ENCODE measurements at regions of chr4 and their contacts with region 1.

Region 1: DNA sequence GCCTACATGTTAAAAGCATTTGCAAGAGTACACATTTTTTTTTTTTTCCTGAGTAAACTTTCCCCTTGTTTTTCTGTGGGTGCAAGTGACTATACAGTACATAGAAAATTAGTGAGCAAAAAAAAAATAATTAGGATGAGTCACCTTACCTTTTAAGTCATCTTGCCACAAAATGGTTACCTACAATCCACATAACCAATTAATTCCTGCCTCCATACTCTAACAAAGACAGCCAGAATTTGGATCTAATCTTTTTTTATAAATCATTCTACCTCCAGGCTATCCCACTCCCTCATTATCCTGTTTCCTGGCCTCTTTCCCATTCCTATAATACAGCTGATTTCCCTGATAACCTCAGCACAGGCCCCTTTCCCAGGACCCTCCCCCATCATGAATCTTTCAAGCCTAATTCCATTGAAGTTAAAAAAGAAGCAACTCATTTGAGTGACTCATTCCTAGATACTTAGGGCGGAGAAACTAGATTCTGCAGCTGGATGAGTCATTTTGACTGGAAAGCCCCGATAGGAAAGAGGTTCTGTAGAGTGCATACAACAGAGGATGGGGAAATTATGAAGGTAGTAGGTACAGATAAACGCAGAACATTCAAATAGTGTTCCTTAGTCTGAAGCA is 128.2 kb downstream of the C4orf51 start:
- DNase-seq: peak; percentile 86
- ATAC-seq: peak; percentile 87
- H3K4me3 ChIP-seq: peak overlapping the region; percentile 18; the same call in 1 of the 2 replicates
- H3K27ac ChIP-seq: peak overlapping the region; percentile 90
- H3K4me1 ChIP-seq: peaks cover 36% of the 10 kb centered on the region
- H3K27me3 ChIP-seq: no peaks in the 10 kb centered on the region
- CTCF ChIP-seq: no peak
- EP300 ChIP-seq: peak; percentile 87 to 91
- POLR2A ChIP-seq: no peak
- RAD21 ChIP-seq: peak; percentile 34; the same call in 1 of the 2 replicates

Region 2: DNA sequence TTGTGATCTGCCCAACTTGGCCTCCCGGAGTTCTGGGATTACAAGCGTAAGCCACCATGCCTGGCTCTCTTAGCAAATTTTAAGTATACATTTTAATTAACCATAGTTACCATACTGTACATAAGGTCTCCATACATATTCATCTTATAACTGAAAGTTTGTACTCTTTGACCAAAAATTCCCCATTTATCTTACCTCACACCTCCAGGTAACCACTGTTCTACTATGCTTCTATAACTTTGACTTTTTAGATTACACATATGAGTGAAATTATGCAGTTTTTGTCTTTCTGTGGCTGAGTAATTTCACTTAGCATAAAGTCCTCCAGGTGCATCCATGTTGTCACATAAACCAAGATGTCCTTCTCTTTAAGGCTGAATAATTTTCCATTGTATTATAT is 110.8 kb before region 1 on chr4:
- CTCF ChIA-PET with region 1: no interaction called
- POLR2A ChIA-PET with region 1: no interaction called
- RAD21 ChIA-PET with region 1: no interaction called
- SMC1A ChIA-PET with region 1: no interaction called
- in situ Hi-C with region 1: no loop called
- intact Hi-C with region 1: no loop called
- DNase-seq: no peak
- ATAC-seq: peak; percentile 74
- H3K4me3 ChIP-seq: no peak overlapping the region
- H3K27ac ChIP-seq: no peak overlapping the region
- H3K4me1 ChIP-seq: no peaks in the 10 kb centered on the region
- H3K27me3 ChIP-seq: no peaks in the 10 kb centered on the region
- CTCF ChIP-seq: no peak
- EP300 ChIP-seq: no peak
- POLR2A ChIP-seq: no peak
- RAD21 ChIP-seq: 0 out of 2 replicates have a peak, but pooled peaks have one; percentile 3

Region 3: DNA sequence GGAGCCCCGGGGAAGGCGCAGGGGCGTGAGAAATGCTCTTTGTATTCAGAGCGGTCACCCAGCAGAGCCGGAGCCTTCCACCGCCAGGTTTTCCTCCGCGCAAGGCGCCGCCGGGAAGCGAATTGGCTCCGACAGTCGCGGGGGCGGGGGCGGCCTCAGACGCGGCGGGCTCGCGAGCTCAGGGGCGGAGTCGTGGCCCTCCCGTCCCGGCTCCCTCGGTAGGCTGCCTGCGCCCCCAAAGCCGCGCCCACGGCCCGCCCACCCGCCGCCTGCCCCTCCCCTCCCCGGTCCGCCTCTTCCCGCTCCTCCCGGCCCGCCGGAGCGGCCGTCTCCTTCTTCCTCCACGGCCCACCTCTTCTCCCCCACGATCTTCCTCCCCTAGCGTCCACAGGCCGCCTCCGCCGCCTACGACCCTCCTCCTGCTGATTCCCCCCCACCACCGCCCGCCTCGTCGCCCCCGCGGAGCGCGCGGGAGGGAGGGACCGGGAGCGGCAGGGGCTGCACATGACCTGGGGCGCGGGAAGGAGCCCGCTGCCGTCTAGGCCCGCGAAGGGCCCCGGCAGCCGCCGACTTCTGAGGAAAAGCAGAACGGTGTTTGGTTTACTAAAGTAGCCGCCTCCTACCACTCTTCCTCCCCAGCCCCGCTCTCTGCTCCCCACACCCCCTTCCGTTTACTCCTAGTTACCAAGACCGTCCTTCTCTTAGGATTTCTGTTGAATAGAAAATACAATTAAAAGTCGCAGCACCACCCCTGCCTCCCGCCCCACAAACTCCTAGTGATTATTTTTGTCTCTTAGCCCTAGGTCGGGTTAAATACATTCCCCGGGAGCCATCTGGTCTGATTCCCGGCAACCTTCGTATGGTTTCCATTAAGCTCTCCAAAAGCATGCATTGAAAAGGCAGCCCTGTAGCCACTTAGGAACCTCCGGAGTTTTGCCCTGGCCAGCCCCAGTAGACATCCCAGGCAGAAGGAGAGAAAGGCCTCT is 74.9 kb before region 1 on chr4:
- CTCF ChIA-PET with region 1: no interaction called
- POLR2A ChIA-PET with region 1: no interaction called
- RAD21 ChIA-PET with region 1: no interaction called
- SMC1A ChIA-PET with region 1: no interaction called
- in situ Hi-C with region 1: no loop called
- intact Hi-C with region 1: loop called (anchors 2 kb)
- DNase-seq: peak; percentile 35
- ATAC-seq: peak; percentile 95
- H3K4me3 ChIP-seq: peak overlapping the region; percentile 85
- H3K27ac ChIP-seq: peak overlapping the region; percentile 6; the same call in 1 of the 2 replicates
- H3K4me1 ChIP-seq: peaks cover 16% of the 10 kb centered on the region
- H3K27me3 ChIP-seq: no peaks in the 10 kb centered on the region; a peak in 1 of 4 replicates
- CTCF ChIP-seq: no peak
- EP300 ChIP-seq: no peak
- POLR2A ChIP-seq: peak; percentile 47; the same call in 1 of the 2 replicates
- RAD21 ChIP-seq: no peak

Region 4: DNA sequence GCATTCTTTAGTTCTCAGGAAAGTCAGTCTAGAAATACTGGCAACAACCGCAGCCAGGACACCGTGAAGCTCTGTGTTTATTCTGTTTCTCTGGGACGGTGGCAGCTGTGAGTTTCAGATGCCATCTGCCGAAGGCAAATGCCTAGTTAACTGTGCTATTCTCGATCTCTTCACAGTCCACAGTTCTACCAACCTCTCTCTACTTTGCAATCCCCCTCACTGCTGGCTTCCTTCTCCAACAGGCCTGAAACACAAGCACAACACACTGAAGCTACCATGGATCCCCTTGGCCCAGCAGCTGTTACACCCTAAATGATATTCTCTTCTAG is 11.7 kb after region 1 on chr4:
- CTCF ChIA-PET with region 1: interaction called, 6 read pairs
- POLR2A ChIA-PET with region 1: interaction called, 11 read pairs
- RAD21 ChIA-PET with region 1: interaction called, 8 read pairs
- SMC1A ChIA-PET with region 1: interaction called, 42 read pairs
- in situ Hi-C with region 1: no loop called
- intact Hi-C with region 1: loop called (anchors 1 kb)
- DNase-seq: no peak
- ATAC-seq: peak; percentile 31
- H3K4me3 ChIP-seq: no peak overlapping the region
- H3K27ac ChIP-seq: no peak overlapping the region; the same call in 1 of the 2 replicates
- H3K4me1 ChIP-seq: peaks cover 29% of the 10 kb centered on the region
- H3K27me3 ChIP-seq: no peaks in the 10 kb centered on the region
- CTCF ChIP-seq: no peak
- EP300 ChIP-seq: no peak
- POLR2A ChIP-seq: no peak
- RAD21 ChIP-seq: no peak

Region 5: GRCh38 chr4:145830699-145831098 is 22.6 kb after region 1 on chr4:
- CTCF ChIA-PET with region 1: interaction called, 7 read pairs
- POLR2A ChIA-PET with region 1: interaction called, 7 read pairs
- RAD21 ChIA-PET with region 1: interaction called, 23 read pairs
- SMC1A ChIA-PET with region 1: interaction called, 19 read pairs
- in situ Hi-C with region 1: no loop called
- intact Hi-C with region 1: loop called (anchors 1 kb)
- DNase-seq: no peak
- ATAC-seq: peak; percentile 79
- H3K4me3 ChIP-seq: 0 out of 2 replicates have a peak overlapping the region, but pooled peaks have one; percentile 16
- H3K27ac ChIP-seq: peak overlapping the region; percentile 77
- H3K4me1 ChIP-seq: peaks cover 30% of the 10 kb centered on the region
- H3K27me3 ChIP-seq: no peaks in the 10 kb centered on the region
- CTCF ChIP-seq: no peak
- EP300 ChIP-seq: 0 out of 4 replicates have a peak, but pooled peaks of 1 of the 2 experiments have one; percentile 20
- POLR2A ChIP-seq: no peak
- RAD21 ChIP-seq: no peak

Region 6: GRCh38 chr4:145887241-145887991 is 79.3 kb after region 1 on chr4:
- CTCF ChIA-PET with region 1: no interaction called
- POLR2A ChIA-PET with region 1: no interaction called
- RAD21 ChIA-PET with region 1: no interaction called
- SMC1A ChIA-PET with region 1: interaction called, 6 read pairs
- in situ Hi-C with region 1: no loop called
- intact Hi-C with region 1: loop called (anchors 2 kb)
- DNase-seq: no peak
- ATAC-seq: peak; percentile 74
- H3K4me3 ChIP-seq: no peak overlapping the region
- H3K27ac ChIP-seq: peak overlapping the region; percentile 17
- H3K4me1 ChIP-seq: peaks cover 39% of the 10 kb centered on the region
- H3K27me3 ChIP-seq: no peaks in the 10 kb centered on the region
- CTCF ChIP-seq: no peak; a peak in 1 of 6 replicates
- EP300 ChIP-seq: no peak
- POLR2A ChIP-seq: no peak
- RAD21 ChIP-seq: 0 out of 2 replicates have a peak, but pooled peaks have one; percentile 14

Measured in GM12878 (cell line).